ENCODE measurements at regions of chr16 and their contacts with region 1.

Region 1: DNA sequence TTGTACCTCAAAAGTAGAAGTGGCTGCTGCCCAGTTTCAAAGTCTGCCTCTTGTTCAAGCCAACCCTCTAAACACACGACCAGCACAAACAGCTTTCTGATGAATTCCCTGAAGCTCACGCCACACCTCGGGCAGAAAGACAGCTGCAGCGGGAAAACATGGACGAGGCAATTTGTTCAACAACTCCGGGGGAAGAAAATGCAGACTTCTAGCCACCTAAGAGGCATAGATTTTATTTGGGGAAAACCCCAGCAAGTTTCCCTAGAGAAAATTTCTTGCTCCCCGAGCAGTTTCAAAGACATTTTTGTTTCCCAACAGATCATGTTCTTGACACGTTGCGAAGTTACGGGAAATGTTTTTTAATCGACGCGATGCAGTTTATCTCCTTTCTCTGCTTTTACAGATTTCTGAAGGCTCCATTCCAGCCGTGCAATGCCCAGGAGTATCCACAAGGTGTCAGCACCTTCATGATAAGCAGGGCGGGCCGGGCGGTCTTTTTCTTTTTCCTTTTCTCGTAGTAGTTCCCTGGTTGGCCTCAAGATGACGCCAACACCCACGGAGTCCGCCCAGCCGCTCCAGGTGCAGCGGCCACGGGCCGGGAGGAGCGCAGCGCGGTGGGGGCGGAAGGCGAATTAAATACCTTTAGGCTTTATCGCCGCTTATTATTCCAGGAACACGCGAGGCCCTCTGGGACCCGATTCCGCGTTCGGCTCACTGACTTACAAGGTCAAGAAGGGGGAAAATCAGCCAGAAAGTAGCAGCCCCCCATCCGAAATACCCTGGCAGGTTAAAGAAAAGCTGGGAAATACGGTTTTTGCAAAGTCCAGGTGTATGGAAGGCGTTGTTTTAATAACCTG is 2.9 kb upstream of the FOXC2 start:
- DNase-seq: peak; percentile 90
- H3K4me3 ChIP-seq: no peak overlapping the region
- H3K27ac ChIP-seq: no peak overlapping the region
- H3K4me1 ChIP-seq: peaks cover 3% of the 10 kb centered on the region
- H3K27me3 ChIP-seq: peaks cover 33% of the 10 kb centered on the region
- CTCF ChIP-seq: peak; percentile 100
- POLR2A ChIP-seq: no peak

Region 2: GRCh38 chr16:86618811-86619794 is 55.4 kb after region 1 on chr16:
- intact Hi-C with region 1: no loop called
- DNase-seq: no peak
- H3K4me3 ChIP-seq: no peak overlapping the region
- H3K27ac ChIP-seq: no peak overlapping the region
- H3K4me1 ChIP-seq: no peaks in the 10 kb centered on the region
- H3K27me3 ChIP-seq: no peaks in the 10 kb centered on the region
- CTCF ChIP-seq: no peak
- POLR2A ChIP-seq: no peak

Region 3: GRCh38 chr16:87062569-87063442 is 499.1 kb after region 1 on chr16:
- intact Hi-C with region 1: loop called (anchors 2 kb)
- DNase-seq: peak; percentile 19
- H3K4me3 ChIP-seq: no peak overlapping the region
- H3K27ac ChIP-seq: no peak overlapping the region
- H3K4me1 ChIP-seq: no peaks in the 10 kb centered on the region
- H3K27me3 ChIP-seq: peaks cover 8% of the 10 kb centered on the region
- CTCF ChIP-seq: peak; percentile 36 to 87 (median 60)
- POLR2A ChIP-seq: no peak

Region 4: GRCh38 chr16:87278191-87279095 is 714.7 kb after region 1 on chr16:
- intact Hi-C with region 1: loop called (anchors 2 kb)
- DNase-seq: peak; percentile 74
- H3K4me3 ChIP-seq: no peak overlapping the region
- H3K27ac ChIP-seq: no peak overlapping the region
- H3K4me1 ChIP-seq: no peaks in the 10 kb centered on the region
- H3K27me3 ChIP-seq: peaks cover 3% of the 10 kb centered on the region
- CTCF ChIP-seq: peak; percentile 63 to 86 (median 83)
- POLR2A ChIP-seq: no peak